ENCODE measurements at regions of chr4 and their contacts with region 1.

Region 1: GRCh38 chr4:15231265-15232091 is 196.4 kb upstream of the C1QTNF7 start:
- DNase-seq: peak; percentile 88

Region 2: DNA sequence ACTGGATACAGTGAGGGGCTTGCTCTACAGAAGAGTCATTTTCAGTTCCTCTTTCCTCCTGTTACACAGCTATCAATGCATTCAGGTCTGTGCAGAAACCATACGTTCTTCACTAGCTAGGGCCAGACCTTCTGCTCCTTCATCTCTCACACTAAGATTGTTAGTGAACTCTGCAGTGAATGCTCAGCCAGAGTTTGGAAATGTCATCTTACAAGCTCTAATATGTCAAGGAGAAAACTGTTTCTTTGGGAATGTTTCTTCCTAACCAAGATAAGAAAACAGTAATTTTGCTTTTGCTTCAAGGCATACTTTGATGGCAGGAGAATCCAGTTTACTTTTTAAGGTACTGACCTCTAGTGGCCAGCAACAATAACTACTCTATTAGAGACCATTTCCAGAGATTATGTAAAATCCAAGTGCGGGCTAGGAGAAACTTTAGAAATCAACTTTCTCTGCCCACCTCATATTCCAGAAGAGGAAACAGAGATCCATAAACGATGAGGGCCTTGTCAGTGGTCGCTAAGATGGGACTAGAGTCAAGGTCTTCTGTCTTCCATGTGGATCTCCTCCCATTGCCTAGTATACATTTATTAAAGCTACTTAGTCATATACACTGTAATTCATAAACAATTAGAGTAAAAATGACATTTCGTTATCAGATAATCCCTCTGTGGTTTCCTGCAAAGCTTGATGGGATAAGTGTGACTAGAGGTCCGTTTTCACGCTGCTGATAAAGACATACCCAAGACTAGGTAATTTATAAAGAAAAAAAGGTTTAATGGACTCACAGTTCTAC is 226.1 kb after region 1 on chr4:
- intact Hi-C with region 1: loop called (anchors 5 kb)
- DNase-seq: no peak

Region 3: GRCh38 chr4:16026160-16026761 is 794.8 kb after region 1 on chr4:
- intact Hi-C with region 1: no loop called
- DNase-seq: no peak

Region 4: DNA sequence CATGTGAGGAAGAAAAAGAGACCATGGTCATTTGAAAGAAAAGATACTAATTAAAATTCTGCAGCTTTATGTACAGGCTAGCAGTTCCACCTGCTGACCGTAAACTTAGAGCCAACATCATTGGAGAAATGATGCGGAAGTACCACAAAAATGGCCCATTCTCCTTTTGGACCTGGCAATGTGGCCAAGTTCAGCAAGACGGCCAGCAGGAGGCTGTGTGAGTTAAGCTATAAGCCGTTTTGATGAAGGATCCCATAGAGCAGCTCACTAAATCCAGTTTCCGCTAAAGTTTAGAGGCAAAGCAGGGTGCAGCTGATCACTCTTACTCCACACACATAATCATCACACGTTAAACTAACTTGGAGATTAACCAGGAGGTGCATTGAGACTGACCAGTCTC is 1533.1 kb after region 1 on chr4:
- intact Hi-C with region 1: no loop called
- DNase-seq: no peak